Activated CD4-positive, alpha-beta T cell treated with anti-CD3 and anti-CD28 coated beads for 36 hours (primary cell): ENCODE measurements at regions of chr1 and their contacts with region 1.

Region 1: DNA sequence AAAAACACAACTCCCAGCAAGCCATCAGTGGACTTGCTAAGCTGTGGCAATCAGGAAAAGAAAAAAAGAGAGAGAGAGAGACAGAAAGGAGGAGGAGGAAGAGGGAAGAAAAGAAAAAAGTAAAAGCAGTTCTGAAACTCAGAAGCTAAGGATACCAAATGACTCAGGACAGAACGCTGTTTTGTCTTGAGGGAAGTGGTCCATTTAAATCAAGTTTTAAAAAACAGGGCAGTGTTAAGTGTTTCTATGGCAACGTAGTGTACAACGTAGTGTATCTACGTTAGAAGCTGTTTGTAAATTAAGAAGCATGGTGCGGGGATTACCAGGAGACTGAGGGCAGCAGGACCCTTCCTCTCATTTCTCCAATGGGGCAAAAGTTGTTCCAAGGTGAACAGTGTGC is 5.8 kb downstream of the ADORA3 start:
- DNase-seq: no peak
- ATAC-seq: peak; percentile 52
- H3K4me3 Mint-ChIP-seq: no peak overlapping the region
- H3K27ac Mint-ChIP-seq: peak overlapping the region; percentile 66
- H3K4me1 Mint-ChIP-seq: peaks cover 34% of the 10 kb centered on the region
- H3K27me3 Mint-ChIP-seq: no peaks in the 10 kb centered on the region

Region 2: GRCh38 chr1:110585481-110585880 is 912.1 kb before region 1 on chr1:
- CTCF ChIA-PET with region 1: no interaction called
- POLR2A ChIA-PET with region 1: no interaction called
- intact Hi-C with region 1: no loop called
- DNase-seq: no peak
- ATAC-seq: no peak
- H3K4me3 Mint-ChIP-seq: no peak overlapping the region
- H3K27ac Mint-ChIP-seq: no peak overlapping the region
- H3K4me1 Mint-ChIP-seq: no peaks in the 10 kb centered on the region
- H3K27me3 Mint-ChIP-seq: peaks cover 3% of the 10 kb centered on the region

Region 3: DNA sequence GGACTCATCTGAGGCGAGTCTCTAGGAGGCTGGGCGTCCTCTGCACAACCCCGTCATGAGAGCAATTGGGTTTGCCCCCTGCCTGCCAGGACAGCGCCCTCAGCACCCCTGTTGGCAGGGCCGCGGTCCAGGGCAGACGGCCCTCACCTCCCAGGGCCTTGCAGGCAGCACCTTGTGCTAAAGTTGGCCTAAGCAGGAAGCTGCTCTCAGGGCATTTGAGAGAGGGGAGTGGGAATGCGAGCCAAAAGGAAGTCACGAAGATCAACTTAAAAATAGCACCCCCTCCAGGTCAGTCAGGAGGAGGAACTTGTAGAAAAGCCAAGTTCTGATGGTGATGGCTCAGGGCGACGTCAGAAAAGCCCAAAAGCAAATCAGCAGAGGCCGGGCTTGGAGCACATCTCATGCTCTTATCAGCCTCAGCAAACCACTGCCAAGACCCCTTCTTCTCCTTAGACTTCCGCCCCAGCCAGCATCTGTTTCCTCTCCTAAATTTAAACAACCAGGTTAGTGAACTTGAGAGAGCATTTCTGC is 18.5 kb after region 1 on chr1:
- CTCF ChIA-PET with region 1: interaction called, 11 read pairs
- POLR2A ChIA-PET with region 1: no interaction called
- intact Hi-C with region 1: no loop called
- DNase-seq: peak; percentile 62
- ATAC-seq: peak; percentile 49
- H3K4me3 Mint-ChIP-seq: peak overlapping the region; percentile 47
- H3K27ac Mint-ChIP-seq: peak overlapping the region; percentile 85
- H3K4me1 Mint-ChIP-seq: peaks cover 45% of the 10 kb centered on the region
- H3K27me3 Mint-ChIP-seq: no peaks in the 10 kb centered on the region